Activated CD4-positive, alpha-beta memory T cell treated with anti-CD3 and anti-CD28 coated beads, Interleukin-2, amount 10 ng/mL, durations not matched to agents 7 days and 5 days (primary cell): ENCODE measurements at regions of chr16 and their contacts with region 1.

Region 1: DNA sequence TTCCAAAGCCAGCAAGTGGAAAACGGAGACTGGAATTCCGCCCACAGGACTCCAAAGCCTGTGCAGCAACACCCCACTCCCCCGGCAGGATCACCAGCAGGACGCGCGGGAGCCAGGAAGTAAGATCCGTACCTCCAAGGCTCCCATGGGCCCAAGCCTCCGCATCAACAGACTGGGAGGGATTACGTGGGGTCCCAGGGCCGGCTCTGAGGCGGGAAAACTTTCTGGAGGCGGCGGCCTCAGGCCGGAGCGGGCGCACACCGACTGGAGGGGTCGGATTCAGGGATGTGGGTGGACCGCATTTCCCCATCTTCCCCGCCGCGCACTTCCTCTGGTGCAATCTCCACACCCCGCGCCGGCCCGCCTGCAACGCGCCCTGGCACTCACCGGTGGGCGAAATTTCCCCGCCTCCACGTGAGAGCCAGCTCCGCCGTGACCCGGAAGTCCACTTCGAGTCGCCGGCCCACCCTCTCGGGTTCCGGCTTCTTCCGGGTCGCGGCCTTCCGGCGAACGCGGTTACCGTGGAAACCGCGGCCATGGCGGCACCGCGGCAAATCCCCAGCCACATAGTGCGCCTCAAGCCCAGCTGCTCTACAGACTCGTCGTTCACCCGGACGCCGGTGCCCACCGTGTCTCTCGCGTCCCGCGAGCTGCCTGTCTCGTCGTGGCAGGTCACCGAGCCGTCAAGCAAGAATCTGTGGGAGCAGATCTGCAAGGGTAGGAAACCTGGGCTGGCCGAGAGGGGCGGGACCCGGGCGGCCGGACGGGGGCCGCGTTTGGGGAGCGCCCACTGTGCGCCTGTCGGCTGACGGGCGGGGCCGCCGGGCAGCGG is at the starts of genes IQCK and KNOP1:
- DNase-seq: peak; percentile 90
- H3K4me3 Mint-ChIP-seq: peak within 1 kb of the TSS; percentile 83
- H3K27ac Mint-ChIP-seq: peak within 1 kb of the TSS; percentile 66
- H3K4me1 Mint-ChIP-seq: peaks cover 20% of the 10 kb centered on the region
- H3K27me3 Mint-ChIP-seq: no peaks in the 10 kb centered on the region
- total RNA-seq, gene IQCK: 0.73 to 1.1 TPM
- total RNA-seq, gene KNOP1: 13.7 TPM

Region 2: DNA sequence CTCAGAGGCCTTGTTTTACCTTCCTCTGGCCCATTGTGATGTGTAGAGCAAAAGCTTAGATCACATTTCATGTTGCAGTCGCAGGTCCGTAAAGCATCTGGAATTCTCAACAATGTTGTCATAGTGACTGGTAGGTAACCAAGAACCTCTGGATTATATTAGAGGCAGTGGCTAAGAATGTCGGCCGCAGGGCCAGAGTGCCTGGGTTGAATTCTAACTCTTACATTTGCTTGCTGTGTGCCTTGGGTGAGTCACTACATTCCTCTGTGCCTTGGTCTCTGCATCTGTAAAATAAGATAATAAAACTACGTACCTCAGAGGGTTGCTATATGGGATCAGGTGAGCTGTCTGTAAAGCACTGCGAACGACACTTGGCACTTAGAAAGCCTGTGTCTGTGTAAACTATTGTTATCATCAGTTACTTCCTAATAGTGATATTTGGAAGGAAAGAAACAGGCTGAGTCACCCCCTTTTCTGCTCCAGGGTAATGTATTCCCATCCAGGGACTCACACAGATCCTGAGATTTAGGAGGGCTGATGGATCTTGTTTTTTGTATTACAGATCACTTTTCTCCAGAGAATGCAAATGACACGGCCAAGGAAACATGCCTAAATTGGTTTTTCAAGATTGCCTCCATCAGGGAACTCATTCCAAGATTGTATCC is 110.2 kb before region 1 on chr16:
- CTCF ChIA-PET with region 1: no interaction called
- POLR2A ChIA-PET with region 1: no interaction called
- DNase-seq: no peak
- H3K4me3 Mint-ChIP-seq: no peak overlapping the region
- H3K27ac Mint-ChIP-seq: no peak overlapping the region
- H3K4me1 Mint-ChIP-seq: peaks cover 2% of the 10 kb centered on the region
- H3K27me3 Mint-ChIP-seq: no peaks in the 10 kb centered on the region

Region 3: GRCh38 chr16:19696328-19696727 is 21.7 kb before region 1 on chr16:
- CTCF ChIA-PET with region 1: interaction called, 5 read pairs
- POLR2A ChIA-PET with region 1: interaction called, 12 read pairs
- DNase-seq: peak; percentile 67
- H3K4me3 Mint-ChIP-seq: peak overlapping the region; percentile 2
- H3K27ac Mint-ChIP-seq: peak overlapping the region; percentile 62
- H3K4me1 Mint-ChIP-seq: peaks cover 41% of the 10 kb centered on the region
- H3K27me3 Mint-ChIP-seq: no peaks in the 10 kb centered on the region

Region 4: GRCh38 chr16:19771796-19772195 is 53.8 kb after region 1 on chr16:
- CTCF ChIA-PET with region 1: no interaction called
- POLR2A ChIA-PET with region 1: no interaction called
- DNase-seq: no peak
- H3K4me3 Mint-ChIP-seq: no peak overlapping the region
- H3K27ac Mint-ChIP-seq: no peak overlapping the region
- H3K4me1 Mint-ChIP-seq: no peaks in the 10 kb centered on the region
- H3K27me3 Mint-ChIP-seq: no peaks in the 10 kb centered on the region